ENCODE measurements at regions of chr5 and their contacts with region 1.

Region 1: GRCh38 chr5:72518001-72518683 is 10.9 kb upstream of the ZNF366 start:
- DNase-seq: peak; percentile 33
- H3K4me3 ChIP-seq: no peak overlapping the region
- H3K27ac ChIP-seq: peak overlapping the region in 1 of 4 donors; percentile 17
- H3K4me1 ChIP-seq: no peaks in the 10 kb centered on the region
- H3K27me3 ChIP-seq: no peaks in the 10 kb centered on the region
- CTCF ChIP-seq: no peak
- EP300 ChIP-seq: no peak
- POLR2A ChIP-seq: no peak

Region 2: GRCh38 chr5:72319976-72320752 is 198.0 kb before region 1 on chr5 and contains the starts of genes MRPS27 and PTCD2:
- in situ Hi-C with region 1: no loop called
- intact Hi-C with region 1: no loop called
- DNase-seq: peak; percentile 97
- H3K4me3 ChIP-seq: peak within 1 kb of the TSS; percentile 57 to 83 (median 65)
- H3K27ac ChIP-seq: peak within 1 kb of the TSS; percentile 77 to 90 (median 82)
- H3K4me1 ChIP-seq: peaks cover 0 to 26% (median 11%) of the 10 kb centered on the region in 4 donors
- H3K27me3 ChIP-seq: no peaks in the 10 kb centered on the region
- CTCF ChIP-seq: peak in 1 of 5 experiments; percentile 21
- EP300 ChIP-seq: no peak
- POLR2A ChIP-seq: peak; percentile 55
- total RNA-seq, gene MRPS27: 14.3 to 34.7 (median 27.9) TPM
- total RNA-seq, gene PTCD2: 1.5 to 9.5 (median 2.9) TPM

Region 3: GRCh38 chr5:72378636-72379290 is 139.4 kb before region 1 on chr5:
- in situ Hi-C with region 1: loop called in 3 of 4 experiments (anchors 5 to 10 kb)
- intact Hi-C with region 1: no loop called
- DNase-seq: no peak
- H3K4me3 ChIP-seq: no peak overlapping the region
- H3K27ac ChIP-seq: no peak overlapping the region
- H3K4me1 ChIP-seq: peaks cover 0 to 4% (median 0%) of the 10 kb centered on the region in 4 donors
- H3K27me3 ChIP-seq: no peaks in the 10 kb centered on the region
- CTCF ChIP-seq: no peak
- EP300 ChIP-seq: no peak
- POLR2A ChIP-seq: no peak

Region 4: DNA sequence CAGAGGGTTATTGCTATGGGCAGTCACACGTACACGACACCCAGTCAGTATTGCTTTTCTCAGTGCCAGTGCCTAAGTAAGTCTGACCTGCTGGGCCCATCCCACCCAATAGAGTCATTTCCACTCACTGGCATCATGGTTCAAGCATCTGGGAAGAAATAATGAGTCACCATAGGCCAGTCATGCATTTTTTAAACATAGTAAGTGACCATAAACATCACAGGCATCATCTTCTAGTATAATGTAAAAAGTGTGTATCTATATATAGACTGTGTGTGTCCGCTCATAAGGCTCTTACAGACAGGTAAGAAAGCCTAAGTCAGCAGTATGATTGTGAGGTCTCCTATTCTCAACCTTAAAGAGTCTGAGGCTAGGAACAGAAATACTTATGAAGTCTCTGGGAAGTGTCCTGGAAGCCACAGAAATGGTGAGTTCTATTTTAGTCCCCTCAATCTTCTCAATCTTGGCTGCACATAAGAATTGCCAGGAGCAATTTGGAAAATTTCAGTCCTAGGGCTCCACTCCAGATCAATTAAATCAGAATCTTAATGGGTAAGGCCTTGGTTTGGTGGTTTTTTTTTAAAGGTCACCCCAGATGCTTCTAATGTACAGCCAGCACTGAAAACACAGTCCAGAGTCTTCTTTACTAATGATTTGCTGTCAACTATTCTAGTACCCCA is 76.1 kb before region 1 on chr5:
- in situ Hi-C with region 1: no loop called
- intact Hi-C with region 1: no loop called
- DNase-seq: no peak
- H3K4me3 ChIP-seq: no peak overlapping the region
- H3K27ac ChIP-seq: peak overlapping the region in 1 of 4 donors; percentile 15
- H3K4me1 ChIP-seq: peaks cover 0 to 6% (median 0%) of the 10 kb centered on the region in 4 donors
- H3K27me3 ChIP-seq: no peaks in the 10 kb centered on the region
- CTCF ChIP-seq: no peak
- EP300 ChIP-seq: no peak
- POLR2A ChIP-seq: no peak

Region 5: DNA sequence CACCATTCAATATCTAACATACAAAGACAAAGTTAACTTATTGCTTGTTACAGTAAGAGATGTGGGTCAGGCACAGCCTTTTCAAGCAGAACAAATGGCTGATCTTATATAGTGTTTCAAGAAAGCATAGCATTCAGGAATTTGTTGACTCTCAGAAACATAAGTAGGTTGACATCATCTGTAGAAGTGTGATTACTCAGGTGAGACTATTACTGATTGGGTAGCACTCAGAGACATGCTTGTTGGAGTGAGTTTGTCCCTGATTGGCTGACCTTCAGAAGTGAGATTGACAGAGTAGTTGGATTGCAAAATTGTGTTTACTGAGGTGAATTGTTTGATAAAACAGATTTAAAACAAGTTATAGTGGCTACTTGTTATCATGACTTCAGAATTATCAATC is 267.7 kb after region 1 on chr5:
- in situ Hi-C with region 1: no loop called
- intact Hi-C with region 1: no loop called
- DNase-seq: no peak
- H3K4me3 ChIP-seq: no peak overlapping the region
- H3K27ac ChIP-seq: no peak overlapping the region
- H3K4me1 ChIP-seq: peaks cover 0 to 21% (median 3%) of the 10 kb centered on the region in 4 donors
- H3K27me3 ChIP-seq: no peaks in the 10 kb centered on the region
- CTCF ChIP-seq: no peak
- EP300 ChIP-seq: no peak
- POLR2A ChIP-seq: no peak